K562 (cell line): ENCODE measurements at regions of chr5 and their contacts with region 1.

Region 1: DNA sequence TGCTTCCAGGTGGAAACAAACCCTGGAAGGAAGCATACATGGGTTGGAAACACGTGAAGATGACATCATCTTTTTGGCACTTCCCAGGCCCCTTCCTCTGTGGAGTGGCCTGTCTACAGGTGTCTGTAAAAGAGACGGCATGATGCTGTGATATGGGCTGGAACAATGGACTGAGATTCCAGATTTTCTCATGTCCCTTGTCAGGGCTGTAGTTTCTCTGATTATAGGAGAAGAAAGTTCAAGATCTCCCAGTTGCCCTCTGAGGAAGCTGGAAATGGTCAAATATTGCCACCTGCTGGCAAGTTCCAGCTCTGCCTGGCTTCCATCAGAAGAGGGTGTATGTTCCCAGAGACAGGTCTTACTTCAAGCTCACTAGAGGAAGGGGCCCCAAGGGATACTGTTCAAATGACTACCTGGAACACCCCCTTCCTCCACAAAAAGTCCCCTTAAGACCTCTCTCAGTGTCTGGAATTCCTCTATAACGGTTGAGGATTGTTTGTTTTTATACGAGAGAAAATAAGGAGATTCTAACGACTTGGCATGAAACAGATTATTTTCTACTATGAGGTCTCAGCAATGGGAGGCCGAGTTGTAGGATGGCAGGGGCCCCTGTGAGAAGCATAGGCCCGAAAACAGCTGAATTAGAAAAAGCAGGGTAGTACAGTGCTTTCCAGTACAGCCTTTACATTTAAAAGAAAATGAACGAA is 7.3 kb upstream of the ANXA6 start:
- DNase-seq: peak; percentile 64 to 87 (median 71)
- ATAC-seq: peak; percentile 99
- H3K4me3 ChIP-seq: no peak overlapping the region
- H3K27ac ChIP-seq: no peak overlapping the region
- H3K4me1 ChIP-seq: no peaks in the 10 kb centered on the region; a peak in 1 of 5 replicates
- H3K27me3 ChIP-seq: peaks cover 2 to 11% of the 10 kb centered on the region in 2 experiments; a peak in 3 of 5 replicates
- CTCF ChIP-seq: peak; percentile 91 to 98 (median 93)
- EP300 ChIP-seq: no peak
- POLR2A ChIP-seq: no peak
- RAD21 ChIP-seq: peak; percentile 96 to 98

Region 2: DNA sequence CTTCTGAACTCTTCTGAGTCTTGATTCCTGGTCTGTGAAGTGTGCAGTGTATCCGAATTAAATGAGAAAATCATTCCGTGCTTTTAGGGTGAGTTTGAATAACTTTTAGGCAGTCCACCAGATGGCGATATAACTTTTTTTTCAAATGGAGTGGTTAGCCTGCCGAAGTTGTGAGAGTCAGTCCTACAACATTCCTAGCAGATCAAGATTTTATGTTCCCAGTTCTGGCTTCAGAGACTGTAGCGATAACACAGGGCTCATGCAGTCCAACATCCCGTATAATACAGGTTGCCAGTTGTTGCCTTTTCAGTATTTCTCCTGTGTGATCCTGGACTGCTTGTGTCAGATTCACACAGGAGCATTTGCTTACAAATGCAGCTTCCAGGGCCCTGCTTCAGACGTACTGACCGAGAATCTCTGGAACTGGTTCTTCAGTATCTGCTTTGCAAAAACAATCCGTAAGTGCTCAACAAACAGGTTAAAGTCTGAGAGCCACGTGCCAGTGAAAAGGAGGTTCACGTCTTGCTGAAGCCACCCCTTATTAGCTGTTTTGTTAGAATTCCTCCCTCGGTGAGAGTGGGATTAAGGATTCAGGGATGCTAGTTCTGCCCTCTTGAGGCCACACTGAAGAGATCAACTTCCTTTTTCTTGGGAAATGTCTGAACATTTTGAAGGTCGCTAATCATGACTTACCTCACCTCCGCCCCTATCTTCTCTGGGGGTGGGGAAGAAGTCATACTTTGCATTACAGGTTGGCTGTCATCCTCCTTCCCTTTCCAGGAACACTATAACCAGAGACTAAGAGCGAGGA is 363.5 kb before region 1 on chr5:
- CTCF ChIA-PET with region 1: no interaction called
- POLR2A ChIA-PET with region 1: no interaction called
- in situ Hi-C with region 1: no loop called
- intact Hi-C with region 1: loop called (anchors 5 kb)
- DNase-seq: peak; percentile 41 to 72 (median 48)
- ATAC-seq: peak; percentile 93
- H3K4me3 ChIP-seq: peak overlapping the region; percentile 30
- H3K27ac ChIP-seq: peak overlapping the region; percentile 53; the same call in 2 of the 3 replicates
- H3K4me1 ChIP-seq: peaks cover 0 to 8% of the 10 kb centered on the region in 2 experiments; a peak in 2 of 5 replicates
- H3K27me3 ChIP-seq: no peaks in the 10 kb centered on the region
- CTCF ChIP-seq: peak; percentile 51 to 71 (median 66)
- EP300 ChIP-seq: no peak
- POLR2A ChIP-seq: no peak
- RAD21 ChIP-seq: peak; percentile 17 to 64; a peak in 3 of 4 replicates

Region 3: GRCh38 chr5:151002250-151002649 is 162.6 kb before region 1 on chr5:
- CTCF ChIA-PET with region 1: interaction called, 15 read pairs
- POLR2A ChIA-PET with region 1: interaction called, 3 read pairs
- in situ Hi-C with region 1: no loop called
- intact Hi-C with region 1: loop called (anchors 1 kb)
- DNase-seq: peak; percentile 36 to 61 (median 42)
- ATAC-seq: peak; percentile 79
- H3K4me3 ChIP-seq: no peak overlapping the region
- H3K27ac ChIP-seq: no peak overlapping the region
- H3K4me1 ChIP-seq: peaks cover 0 to 6% of the 10 kb centered on the region in 2 experiments; a peak in 3 of 5 replicates
- H3K27me3 ChIP-seq: 0 out of 5 replicates have a peak, but pooled peaks cover 0 to 5% of the 10 kb centered on the region in 2 experiments
- CTCF ChIP-seq: peak; percentile 56 to 82 (median 68); a peak in 5 of 6 replicates
- EP300 ChIP-seq: no peak
- POLR2A ChIP-seq: no peak
- RAD21 ChIP-seq: peak; percentile 88 to 96

Region 4: DNA sequence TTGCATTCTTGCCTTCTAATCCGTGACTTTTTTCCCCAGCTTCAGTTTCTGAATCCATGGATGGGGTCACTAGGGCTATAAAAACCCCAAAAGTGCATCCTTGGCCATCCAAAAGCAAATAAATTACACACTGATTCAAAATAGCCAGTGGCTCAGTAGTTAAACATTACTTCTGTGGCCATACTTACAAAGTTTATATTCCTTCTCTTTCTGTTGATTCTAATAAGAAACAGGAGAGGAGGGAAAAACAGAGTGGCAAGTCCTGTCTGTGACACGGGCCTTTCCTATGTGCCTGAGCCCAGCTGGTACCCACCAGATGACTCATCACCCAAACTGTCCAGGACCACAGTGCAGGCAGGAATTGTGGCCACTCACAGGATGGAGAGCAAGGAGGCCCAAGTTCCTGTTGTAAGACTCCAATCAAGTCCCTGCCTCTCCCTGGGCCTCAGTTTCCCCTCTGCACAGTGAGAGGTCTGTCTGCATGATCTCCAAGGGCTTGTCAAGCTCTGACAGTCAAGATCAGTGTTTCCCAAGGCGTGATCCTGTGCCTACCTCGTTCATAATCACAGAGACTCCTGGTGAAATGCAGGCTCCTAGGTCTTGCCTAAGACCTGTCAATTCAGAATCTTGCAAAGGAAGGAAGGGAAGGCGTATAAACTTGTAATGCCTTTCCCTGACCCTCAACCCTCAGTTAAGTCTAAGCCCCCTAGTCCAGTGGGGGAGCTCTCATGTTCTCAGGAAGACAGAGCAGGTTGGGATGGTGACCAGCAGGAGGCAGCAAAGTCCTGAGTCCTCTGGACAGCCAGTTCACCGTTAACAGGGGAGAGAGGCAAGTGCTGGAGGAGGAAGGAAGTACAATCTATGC is 113.5 kb before region 1 on chr5:
- CTCF ChIA-PET with region 1: interaction called, 12 read pairs
- POLR2A ChIA-PET with region 1: interaction called, 12 read pairs
- in situ Hi-C with region 1: no loop called
- intact Hi-C with region 1: loop called (anchors 1 kb)
- DNase-seq: peak; percentile 70 to 85 (median 78)
- ATAC-seq: peak; percentile 97
- H3K4me3 ChIP-seq: no peak overlapping the region
- H3K27ac ChIP-seq: no peak overlapping the region
- H3K4me1 ChIP-seq: no peaks in the 10 kb centered on the region
- H3K27me3 ChIP-seq: no peaks in the 10 kb centered on the region
- CTCF ChIP-seq: peak; percentile 94 to 98 (median 97)
- EP300 ChIP-seq: no peak
- POLR2A ChIP-seq: no peak
- RAD21 ChIP-seq: peak; percentile 96 to 99

Region 5: GRCh38 chr5:151126199-151126645 is 38.6 kb before region 1 on chr5:
- CTCF ChIA-PET with region 1: interaction called, 30 read pairs
- POLR2A ChIA-PET with region 1: interaction called, 10 read pairs
- in situ Hi-C with region 1: loop called (anchors 5 kb)
- intact Hi-C with region 1: loop called (anchors 1 kb)
- DNase-seq: peak; percentile 84 to 91 (median 90)
- ATAC-seq: peak; percentile 96
- H3K4me3 ChIP-seq: no peak overlapping the region
- H3K27ac ChIP-seq: no peak overlapping the region
- H3K4me1 ChIP-seq: peaks cover 7 to 8% of the 10 kb centered on the region in 2 experiments; a peak in 4 of 5 replicates
- H3K27me3 ChIP-seq: peaks cover 0 to 11% of the 10 kb centered on the region in 2 experiments; a peak in 1 of 5 replicates
- CTCF ChIP-seq: peak; percentile 91 to 93 (median 91)
- EP300 ChIP-seq: no peak
- POLR2A ChIP-seq: no peak
- RAD21 ChIP-seq: peak; percentile 94 to 98

Region 6: DNA sequence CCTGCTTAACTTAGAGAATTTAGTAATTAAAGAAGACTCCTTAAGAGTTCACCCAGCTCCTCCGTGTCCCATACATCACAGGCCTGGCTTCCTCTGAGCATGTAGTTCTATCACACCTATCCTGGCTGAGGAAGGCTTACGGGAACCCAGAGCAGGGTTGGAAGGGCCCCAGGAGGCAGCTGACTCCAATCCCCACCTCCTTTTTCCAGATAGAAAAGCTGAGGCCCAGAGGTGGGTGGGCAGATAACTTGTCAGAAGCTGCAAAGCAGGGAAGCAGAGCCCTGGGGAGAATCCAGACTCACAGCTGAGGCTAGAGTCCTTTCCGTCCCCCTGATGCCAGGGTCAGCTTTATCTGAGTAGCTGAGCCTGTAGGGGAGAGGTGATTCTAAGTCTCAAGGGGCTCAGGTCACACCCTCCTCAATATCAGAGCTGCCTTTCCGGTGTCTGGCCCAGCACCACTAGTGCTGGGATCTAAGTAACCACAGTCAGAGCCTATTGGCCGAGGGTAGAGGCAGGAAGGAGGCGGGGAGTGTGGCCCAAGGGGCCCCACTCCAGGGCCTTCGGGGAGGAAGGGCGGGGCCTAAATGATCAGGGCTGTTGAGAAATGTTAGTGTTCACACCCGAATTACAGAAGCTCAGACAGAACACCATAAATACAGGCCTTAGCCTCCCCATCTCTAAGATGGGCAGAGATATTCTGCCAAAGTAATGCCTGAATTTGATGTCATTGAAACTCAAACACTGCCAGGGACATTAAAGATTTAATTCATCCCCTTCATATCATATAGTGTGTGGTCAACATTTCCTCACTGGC is 49.2 kb after region 1 on chr5:
- CTCF ChIA-PET with region 1: no interaction called
- POLR2A ChIA-PET with region 1: no interaction called
- in situ Hi-C with region 1: no loop called
- intact Hi-C with region 1: no loop called
- DNase-seq: peak; percentile 80 to 95 (median 88)
- ATAC-seq: peak; percentile 99
- H3K4me3 ChIP-seq: peak overlapping the region; percentile 3; the same call in 1 of the 2 replicates
- H3K27ac ChIP-seq: peak overlapping the region; percentile 69
- H3K4me1 ChIP-seq: peaks cover 30 to 48% of the 10 kb centered on the region in 2 experiments
- H3K27me3 ChIP-seq: no peaks in the 10 kb centered on the region
- CTCF ChIP-seq: no peak
- EP300 ChIP-seq: peak; percentile 44; the same call in 1 of the 2 replicates
- POLR2A ChIP-seq: peak; percentile 70
- RAD21 ChIP-seq: no peak

Region 7: DNA sequence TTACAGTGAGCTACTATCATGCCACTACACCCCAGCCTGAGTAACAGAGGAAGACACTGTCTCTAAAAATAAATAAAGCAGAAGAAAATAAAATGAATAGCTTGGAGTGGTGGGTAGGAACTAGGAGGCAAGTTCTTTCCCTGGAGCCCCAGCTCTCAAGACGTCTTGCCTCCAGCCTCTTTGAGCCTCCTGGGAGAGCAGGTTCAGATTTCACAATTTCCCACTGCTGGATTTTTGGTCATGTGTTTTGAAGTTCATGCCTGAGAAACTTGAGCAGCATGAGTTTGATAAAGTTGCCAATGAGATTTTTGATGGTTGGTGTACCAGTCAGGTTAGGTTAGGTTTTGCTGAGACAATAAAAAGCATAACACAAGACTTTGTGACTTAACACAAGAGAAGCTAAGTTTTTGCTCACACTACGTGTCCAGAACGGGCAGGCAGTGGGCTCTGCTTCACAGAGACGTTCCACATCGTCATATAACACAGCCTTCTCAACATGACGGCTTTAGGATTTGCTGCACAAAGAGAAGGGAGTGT is 63.1 kb after region 1 on chr5:
- CTCF ChIA-PET with region 1: no interaction called
- POLR2A ChIA-PET with region 1: no interaction called
- in situ Hi-C with region 1: no loop called
- intact Hi-C with region 1: no loop called
- DNase-seq: no peak
- ATAC-seq: no peak
- H3K4me3 ChIP-seq: no peak overlapping the region
- H3K27ac ChIP-seq: no peak overlapping the region
- H3K4me1 ChIP-seq: peaks cover 7 to 13% of the 10 kb centered on the region in 2 experiments; a peak in 4 of 5 replicates
- H3K27me3 ChIP-seq: peaks cover 5 to 6% of the 10 kb centered on the region in 2 experiments; a peak in 4 of 5 replicates
- CTCF ChIP-seq: no peak
- EP300 ChIP-seq: no peak
- POLR2A ChIP-seq: no peak
- RAD21 ChIP-seq: no peak

Region 8: DNA sequence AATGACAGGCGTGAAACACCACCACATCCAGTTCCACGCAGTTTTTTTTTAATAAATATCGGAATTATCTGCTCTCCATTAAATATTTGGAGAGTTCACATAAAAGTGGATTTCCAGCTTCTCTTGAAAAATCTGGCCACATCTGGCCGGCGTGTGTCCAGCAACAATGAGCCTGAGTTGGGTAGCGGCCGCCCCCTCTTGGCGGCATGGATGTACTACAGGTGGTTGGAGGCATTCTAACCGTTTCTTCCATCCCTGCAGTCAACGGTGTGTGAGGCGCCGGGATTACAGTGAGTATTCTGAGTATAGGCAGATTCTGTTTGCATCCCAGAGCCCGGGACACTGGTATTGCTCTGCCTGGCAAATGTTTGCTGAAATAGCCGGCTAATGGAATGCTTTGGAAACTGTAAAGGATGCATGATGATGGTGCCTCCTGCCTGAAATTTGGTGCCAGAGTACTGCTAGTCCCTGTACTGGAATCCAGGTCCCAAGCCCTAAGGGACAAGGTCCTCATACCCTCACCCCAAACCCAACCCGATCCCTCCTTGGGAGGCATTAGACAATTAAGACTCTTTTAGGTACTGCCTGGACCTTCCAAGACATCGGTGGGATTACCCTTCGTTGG is 74.5 kb after region 1 on chr5:
- CTCF ChIA-PET with region 1: interaction called, 4 read pairs
- POLR2A ChIA-PET with region 1: no interaction called
- in situ Hi-C with region 1: loop called (anchors 5 kb)
- intact Hi-C with region 1: loop called (anchors 2 kb)
- DNase-seq: peak; percentile 75 to 83 (median 78)
- ATAC-seq: peak; percentile 95
- H3K4me3 ChIP-seq: no peak overlapping the region
- H3K27ac ChIP-seq: no peak overlapping the region
- H3K4me1 ChIP-seq: peaks cover 0 to 6% of the 10 kb centered on the region in 2 experiments; a peak in 3 of 5 replicates
- H3K27me3 ChIP-seq: peaks cover 0 to 22% of the 10 kb centered on the region in 2 experiments; a peak in 3 of 5 replicates
- CTCF ChIP-seq: peak; percentile 91 to 94 (median 92)
- EP300 ChIP-seq: no peak
- POLR2A ChIP-seq: no peak
- RAD21 ChIP-seq: peak; percentile 85 to 90

Region 9: GRCh38 chr5:151315998-151316597 is 151.3 kb after region 1 on chr5:
- CTCF ChIA-PET with region 1: no interaction called
- POLR2A ChIA-PET with region 1: no interaction called
- in situ Hi-C with region 1: no loop called
- intact Hi-C with region 1: loop called (anchors 5 kb)
- DNase-seq: peak; percentile 67 to 71 (median 68)
- ATAC-seq: peak; percentile 98
- H3K4me3 ChIP-seq: no peak overlapping the region
- H3K27ac ChIP-seq: no peak overlapping the region
- H3K4me1 ChIP-seq: no peaks in the 10 kb centered on the region
- H3K27me3 ChIP-seq: peaks cover 0 to 9% of the 10 kb centered on the region in 2 experiments; a peak in 1 of 5 replicates
- CTCF ChIP-seq: peak; percentile 82 to 90 (median 89)
- EP300 ChIP-seq: no peak
- POLR2A ChIP-seq: no peak
- RAD21 ChIP-seq: peak; percentile 70 to 85

Region 10: GRCh38 chr5:151447174-151448037 is 282.6 kb after region 1 on chr5 and contains the start of gene SLC36A1:
- CTCF ChIA-PET with region 1: no interaction called
- POLR2A ChIA-PET with region 1: no interaction called
- in situ Hi-C with region 1: no loop called
- intact Hi-C with region 1: no loop called
- DNase-seq: peak; percentile 91 to 97 (median 96)
- ATAC-seq: peak; percentile 93
- H3K4me3 ChIP-seq: peak within 1 kb of the TSS; percentile 66
- H3K27ac ChIP-seq: peak within 1 kb of the TSS; percentile 65
- H3K4me1 ChIP-seq: peaks cover 10 to 18% of the 10 kb centered on the region in 2 experiments; a peak in 3 of 5 replicates
- H3K27me3 ChIP-seq: no peaks in the 10 kb centered on the region
- CTCF ChIP-seq: peak; percentile 90 to 95 (median 92)
- EP300 ChIP-seq: peak; percentile 55; the same call in 1 of the 2 replicates
- POLR2A ChIP-seq: peak; percentile 73
- RAD21 ChIP-seq: peak; percentile 93 to 95
- polyA plus RNA-seq, gene SLC36A1: 1.6 to 1.7 TPM